ENCODE measurements at regions of chr3 and their contacts with region 1.

Region 1: GRCh38 chr3:12810013-12810780 is 13.7 kb downstream of the CAND2 start:
- DNase-seq: peak; percentile 95 to 98 (median 97)
- H3K4me3 ChIP-seq: peak overlapping the region; percentile 62
- H3K4me3 Mint-ChIP-seq: peak overlapping the region; percentile 70 to 83 (median 77)
- H3K27ac ChIP-seq: peak overlapping the region; percentile 59
- H3K27ac Mint-ChIP-seq: peak overlapping the region; percentile 42 to 86 (median 78)
- H3K4me1 ChIP-seq: peaks cover 6% of the 10 kb centered on the region
- H3K4me1 Mint-ChIP-seq: peaks cover 10 to 14% (median 12%) of the 10 kb centered on the region in 3 donors
- H3K27me3 ChIP-seq: no peaks in the 10 kb centered on the region
- H3K27me3 Mint-ChIP-seq: no peaks in the 10 kb centered on the region

Region 2: GRCh38 chr3:12734960-12735359 is 75.2 kb before region 1 on chr3:
- CTCF ChIA-PET with region 1: no interaction called
- POLR2A ChIA-PET with region 1: no interaction called
- DNase-seq: no peak
- H3K4me3 ChIP-seq: no peak overlapping the region
- H3K4me3 Mint-ChIP-seq: no peak overlapping the region
- H3K27ac ChIP-seq: no peak overlapping the region
- H3K27ac Mint-ChIP-seq: no peak overlapping the region
- H3K4me1 ChIP-seq: no peaks in the 10 kb centered on the region
- H3K4me1 Mint-ChIP-seq: no peaks in the 10 kb centered on the region
- H3K27me3 ChIP-seq: no peaks in the 10 kb centered on the region
- H3K27me3 Mint-ChIP-seq: peaks cover 0 to 17% of the 10 kb centered on the region in 2 donors

Region 3: GRCh38 chr3:12782172-12782815 is 27.9 kb before region 1 on chr3:
- CTCF ChIA-PET with region 1: interaction called, 58 read pairs
- POLR2A ChIA-PET with region 1: no interaction called
- DNase-seq: no peak
- H3K4me3 ChIP-seq: no peak overlapping the region
- H3K4me3 Mint-ChIP-seq: no peak overlapping the region
- H3K27ac ChIP-seq: no peak overlapping the region
- H3K27ac Mint-ChIP-seq: no peak overlapping the region
- H3K4me1 ChIP-seq: no peaks in the 10 kb centered on the region
- H3K4me1 Mint-ChIP-seq: peaks cover 0 to under 1% (median 0%) of the 10 kb centered on the region in 3 donors
- H3K27me3 ChIP-seq: no peaks in the 10 kb centered on the region
- H3K27me3 Mint-ChIP-seq: peaks cover 11 to 55% of the 10 kb centered on the region in 2 donors

Region 4: GRCh38 chr3:12796171-12797123 is 13.8 kb before region 1 on chr3 and contains the start of gene CAND2:
- CTCF ChIA-PET with region 1: interaction called, 29 read pairs
- POLR2A ChIA-PET with region 1: interaction called, 10 read pairs
- DNase-seq: peak in 4 of 5 donors; percentile 12 to 58 (median 39)
- H3K4me3 ChIP-seq: peak within 1 kb of the TSS; percentile 62
- H3K4me3 Mint-ChIP-seq: peak within 1 kb of the TSS; percentile 85 to 94 (median 89)
- H3K27ac ChIP-seq: peak within 1 kb of the TSS; percentile 47
- H3K27ac Mint-ChIP-seq: peak within 1 kb of the TSS in 6 of 8 donors; percentile 29 to 82 (median 78)
- H3K4me1 ChIP-seq: peaks cover 6% of the 10 kb centered on the region
- H3K4me1 Mint-ChIP-seq: peaks cover 8 to 23% (median 8%) of the 10 kb centered on the region in 3 donors
- H3K27me3 ChIP-seq: peaks cover 5% of the 10 kb centered on the region
- H3K27me3 Mint-ChIP-seq: peaks cover 9 to 19% of the 10 kb centered on the region in 2 donors
- total RNA-seq, gene CAND2: 1.0 to 1.1 TPM

Region 5: DNA sequence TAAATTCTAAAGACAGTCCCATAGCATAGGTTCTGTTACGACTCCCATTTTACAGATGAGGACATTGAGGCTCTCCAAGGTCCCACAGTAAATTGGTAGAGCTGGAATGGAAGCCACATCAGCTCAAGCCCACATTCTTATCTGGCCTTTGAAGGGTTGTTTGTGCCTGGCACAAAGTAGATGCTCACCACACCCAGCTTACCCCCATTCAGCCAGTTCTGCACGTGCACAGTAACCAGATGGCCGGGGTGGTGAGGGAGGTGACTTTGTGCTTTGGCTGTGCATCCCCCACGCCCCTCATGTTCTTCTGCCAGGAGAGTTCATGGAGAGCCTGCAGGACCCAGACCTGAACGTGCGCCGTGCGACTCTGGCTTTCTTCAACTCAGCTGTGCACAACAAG is 15.0 kb after region 1 on chr3:
- CTCF ChIA-PET with region 1: interaction called, 19 read pairs
- POLR2A ChIA-PET with region 1: no interaction called
- DNase-seq: no peak
- H3K4me3 ChIP-seq: no peak overlapping the region
- H3K4me3 Mint-ChIP-seq: no peak overlapping the region
- H3K27ac ChIP-seq: no peak overlapping the region
- H3K27ac Mint-ChIP-seq: no peak overlapping the region
- H3K4me1 ChIP-seq: no peaks in the 10 kb centered on the region
- H3K4me1 Mint-ChIP-seq: no peaks in the 10 kb centered on the region
- H3K27me3 ChIP-seq: no peaks in the 10 kb centered on the region
- H3K27me3 Mint-ChIP-seq: peaks cover 0 to 5% of the 10 kb centered on the region in 2 donors

Region 6: DNA sequence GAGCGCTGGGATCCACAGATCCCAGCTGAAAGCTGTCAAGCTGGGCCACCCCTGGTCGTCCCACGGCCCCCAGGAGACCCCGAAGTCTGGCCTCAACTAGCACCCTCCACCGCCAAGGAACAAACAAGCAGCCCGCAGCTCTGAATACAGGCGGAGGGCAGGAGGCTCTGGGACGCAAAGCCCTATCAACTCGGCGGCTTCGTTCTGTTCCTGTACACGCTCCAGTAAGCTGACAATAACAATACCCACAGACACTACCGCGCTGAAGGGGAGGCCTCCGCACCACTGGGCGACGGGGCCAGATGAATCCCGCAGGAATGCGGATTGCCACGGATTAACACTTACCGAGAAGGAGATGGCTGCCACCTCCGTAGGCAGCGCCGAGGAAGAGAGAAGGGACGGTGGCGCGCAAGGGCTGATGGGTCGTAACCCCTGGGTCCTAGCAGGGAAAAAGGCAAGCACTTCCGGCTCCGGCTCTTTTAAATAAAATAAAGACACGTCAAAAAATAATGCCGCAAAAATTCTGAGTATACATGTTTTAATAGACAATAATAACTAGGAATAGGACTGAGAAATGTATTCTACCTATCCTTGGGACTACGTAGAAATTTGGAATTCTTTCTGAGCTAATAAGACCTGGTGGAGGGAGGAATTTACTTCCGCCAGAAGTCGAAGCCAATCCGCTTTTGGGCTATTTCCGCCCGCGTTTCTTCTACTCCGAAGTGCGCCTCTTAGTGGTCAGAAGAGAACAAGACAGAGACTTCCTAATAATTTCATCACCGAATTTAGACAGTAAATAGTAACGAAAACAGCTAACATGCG is 31.2 kb after region 1 on chr3 and contains the start of gene RPL32:
- CTCF ChIA-PET with region 1: interaction called, 75 read pairs
- POLR2A ChIA-PET with region 1: interaction called, 23 read pairs
- DNase-seq: peak; percentile 76 to 91 (median 88)
- H3K4me3 ChIP-seq: peak within 1 kb of the TSS; percentile 69
- H3K4me3 Mint-ChIP-seq: peak within 1 kb of the TSS; percentile 94 to 98 (median 97)
- H3K27ac ChIP-seq: peak within 1 kb of the TSS; percentile 99
- H3K27ac Mint-ChIP-seq: peak within 1 kb of the TSS; percentile 98 to 100 (median 100)
- H3K4me1 ChIP-seq: peaks cover 43% of the 10 kb centered on the region
- H3K4me1 Mint-ChIP-seq: peaks cover 36 to 51% (median 50%) of the 10 kb centered on the region in 3 donors
- H3K27me3 ChIP-seq: no peaks in the 10 kb centered on the region
- H3K27me3 Mint-ChIP-seq: peaks cover 0 to 1% of the 10 kb centered on the region in 2 donors
- total RNA-seq, gene RPL32: 2,528 to 2,642 TPM